ENCODE measurements at regions of chr1 and their contacts with region 1.

Region 1: DNA sequence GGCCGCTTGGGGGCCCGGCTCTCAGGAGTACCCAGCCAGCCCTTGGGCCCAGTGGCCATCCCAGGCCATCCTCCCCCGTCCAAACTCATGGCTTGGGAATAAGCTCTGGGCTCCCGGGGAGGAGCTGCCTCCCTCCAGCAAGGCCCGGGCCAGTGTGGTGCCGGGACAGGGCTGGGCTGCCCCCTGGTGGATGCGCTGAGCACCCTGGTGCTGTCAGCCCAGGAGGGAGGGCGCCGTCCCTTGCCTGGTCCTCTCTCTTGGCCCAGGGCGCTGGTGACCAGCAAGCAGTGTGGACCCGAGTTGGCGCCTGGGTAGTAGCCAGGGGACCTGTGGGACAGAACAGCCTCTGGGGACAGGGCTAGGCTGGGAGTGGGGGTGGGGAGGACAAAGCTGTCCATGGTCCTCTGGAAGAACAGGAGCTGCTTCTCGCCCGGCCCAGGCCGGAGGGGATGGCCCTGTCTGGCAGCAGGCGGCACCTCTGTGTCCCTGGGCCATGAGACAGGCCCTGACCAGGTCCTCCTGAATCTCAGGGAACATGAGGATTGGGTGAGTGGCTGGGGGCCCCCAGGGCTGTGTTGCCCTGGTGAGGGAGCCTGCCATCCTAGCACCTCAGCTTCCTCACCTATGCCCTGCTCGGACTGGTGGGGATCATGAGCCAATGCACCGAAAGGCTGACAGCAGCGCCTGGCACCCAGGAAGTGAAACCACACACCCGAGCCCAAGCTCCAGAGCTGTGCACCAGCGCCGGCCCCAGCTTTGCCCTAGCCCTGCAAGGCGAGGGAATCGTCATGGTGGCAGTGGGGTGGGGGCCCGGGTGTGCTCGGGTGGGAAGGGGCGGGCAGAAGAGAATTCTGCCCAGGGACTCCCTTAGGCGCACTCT is 9.4 kb downstream of the MORN1 start:
- DNase-seq: peak; percentile 93
- H3K4me3 ChIP-seq: no peak overlapping the region
- H3K27ac ChIP-seq: peak overlapping the region in 2 of 4 donors; percentile 12 to 26
- H3K4me1 ChIP-seq: peaks cover 0 to 16% (median 11%) of the 10 kb centered on the region in 4 donors
- H3K27me3 ChIP-seq: no peaks in the 10 kb centered on the region
- CTCF ChIP-seq: peak; percentile 93 to 96 (median 95)
- EP300 ChIP-seq: no peak
- POLR2A ChIP-seq: no peak

Region 2: DNA sequence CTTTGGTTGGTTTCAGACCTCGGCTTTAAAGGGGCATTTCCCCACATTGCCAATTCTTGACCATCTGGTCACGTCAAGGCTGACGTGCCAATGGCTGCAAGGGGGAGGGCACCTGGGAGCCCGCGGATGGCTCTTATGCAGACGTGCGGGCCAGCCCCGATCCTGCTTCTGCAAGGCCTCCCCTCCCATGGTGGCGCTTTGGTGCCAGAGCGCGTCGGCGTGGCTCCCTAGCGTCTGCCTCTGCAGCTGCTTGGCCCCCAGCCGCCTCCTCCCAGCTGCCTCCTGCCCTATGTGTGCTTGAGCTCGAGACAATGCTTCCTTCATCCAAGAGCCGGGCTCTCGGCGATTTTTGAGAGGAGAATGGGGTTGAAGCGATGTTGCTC is 124.7 kb before region 1 on chr1:
- intact Hi-C with region 1: no loop called
- DNase-seq: no peak
- H3K4me3 ChIP-seq: no peak overlapping the region
- H3K27ac ChIP-seq: peak overlapping the region; percentile 30 to 74 (median 60)
- H3K4me1 ChIP-seq: peaks cover 0 to 87% (median 85%) of the 10 kb centered on the region in 4 donors
- H3K27me3 ChIP-seq: no peaks in the 10 kb centered on the region
- CTCF ChIP-seq: no peak
- EP300 ChIP-seq: no peak
- POLR2A ChIP-seq: no peak

Region 3: DNA sequence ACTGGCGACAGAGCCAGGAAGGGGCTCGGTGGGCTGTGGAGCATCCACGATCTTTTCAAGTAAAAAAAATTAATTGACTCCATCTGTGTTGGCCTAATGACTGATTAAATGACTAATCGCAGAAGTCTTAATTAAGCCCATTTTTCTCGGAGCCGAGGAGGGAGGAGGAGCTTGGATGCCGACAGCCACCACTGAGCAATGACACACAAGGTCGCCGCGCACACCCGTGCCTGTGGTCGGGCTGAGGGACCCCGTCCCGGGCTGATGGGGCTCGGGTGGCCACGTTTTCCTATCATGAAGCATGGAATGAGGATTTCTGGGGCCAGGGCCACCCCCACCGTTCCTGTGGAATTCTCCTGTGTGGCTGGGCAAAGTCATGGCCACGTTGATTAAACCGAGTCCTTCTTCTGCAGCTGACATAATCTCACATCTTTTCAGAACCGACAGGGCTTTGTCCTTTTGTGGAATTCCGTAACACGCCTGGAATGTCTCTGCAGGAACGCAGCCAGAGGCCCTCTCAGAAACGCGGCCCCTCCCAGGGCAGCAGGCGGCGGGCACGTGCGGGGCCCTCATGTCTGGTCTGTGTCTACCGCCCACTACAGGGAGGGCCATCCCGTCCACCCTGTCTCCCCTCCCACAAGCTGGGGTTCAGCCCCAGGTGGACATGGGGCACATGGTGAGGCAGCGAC is 51.3 kb before region 1 on chr1:
- intact Hi-C with region 1: loop called (anchors 5 kb)
- DNase-seq: peak; percentile 88
- H3K4me3 ChIP-seq: no peak overlapping the region
- H3K27ac ChIP-seq: peak overlapping the region; percentile 67 to 83 (median 79)
- H3K4me1 ChIP-seq: peaks cover 0 to 24% (median 19%) of the 10 kb centered on the region in 4 donors
- H3K27me3 ChIP-seq: no peaks in the 10 kb centered on the region
- CTCF ChIP-seq: no peak
- EP300 ChIP-seq: no peak
- POLR2A ChIP-seq: no peak